CD4-positive, alpha-beta T cell (primary cell): ENCODE measurements at regions of chr7 and their contacts with region 1.

Region 1: DNA sequence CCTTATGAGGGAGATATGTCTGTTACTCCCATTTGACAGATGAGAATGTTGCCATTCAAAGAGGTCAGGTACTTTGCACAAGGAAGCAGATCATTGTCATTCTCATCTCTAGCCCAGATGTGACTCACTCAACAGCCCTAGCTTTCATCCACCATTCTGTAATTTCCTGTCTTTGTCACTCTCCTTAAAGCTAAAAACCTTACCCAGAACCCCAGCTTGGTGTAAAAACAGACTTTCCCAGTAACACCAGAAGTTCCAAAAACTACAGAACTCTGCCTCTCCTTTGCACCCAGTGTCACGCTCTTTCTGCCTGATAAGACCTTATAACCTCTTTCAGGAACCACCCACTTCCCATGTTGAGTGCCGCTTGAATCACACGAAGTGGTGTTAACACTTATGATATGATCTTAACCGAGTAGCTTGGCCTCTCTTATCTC is 89.1 kb upstream of the SP4 start:
- DNase-seq: peak in 6 of 14 experiments; percentile 15 to 75 (median 52)
- ATAC-seq: peak; percentile 73
- H3K4me3 ChIP-seq: no peak overlapping the region
- H3K4me3 Mint-ChIP-seq: peak overlapping the region; percentile 5
- H3K27ac ChIP-seq: peak overlapping the region in 1 of 2 donors; percentile 56
- H3K27ac Mint-ChIP-seq: peak overlapping the region; percentile 46
- H3K4me1 ChIP-seq: peaks cover 15% of the 10 kb centered on the region
- H3K4me1 Mint-ChIP-seq: peaks cover 14% of the 10 kb centered on the region
- H3K27me3 ChIP-seq: no peaks in the 10 kb centered on the region
- H3K27me3 Mint-ChIP-seq: no peaks in the 10 kb centered on the region
- CTCF ChIP-seq: no peak

Region 2: DNA sequence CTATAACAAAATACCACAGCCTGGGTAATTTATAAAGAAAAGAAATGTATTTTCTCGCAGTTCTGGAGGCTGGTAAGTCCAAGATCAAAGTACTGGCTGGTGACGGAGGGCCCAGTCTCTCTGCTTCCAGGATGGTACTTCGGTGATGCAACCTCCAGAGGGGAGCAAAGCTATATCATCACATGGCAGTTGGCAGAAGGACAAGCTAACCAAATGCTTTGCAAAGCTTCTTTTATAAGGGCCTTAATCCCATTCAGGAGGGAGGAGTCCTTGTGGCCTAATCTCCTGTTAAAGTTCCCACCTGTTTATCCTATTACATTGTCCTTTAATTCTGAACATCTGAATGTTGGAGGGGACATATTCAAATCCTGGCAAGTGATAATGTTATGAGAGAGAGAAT is 45.0 kb before region 1 on chr7:
- CTCF ChIA-PET with region 1: no interaction called
- POLR2A ChIA-PET with region 1: no interaction called
- intact Hi-C with region 1: no loop called
- DNase-seq: no peak
- ATAC-seq: no peak
- H3K4me3 ChIP-seq: no peak overlapping the region
- H3K4me3 Mint-ChIP-seq: no peak overlapping the region
- H3K27ac ChIP-seq: no peak overlapping the region
- H3K27ac Mint-ChIP-seq: no peak overlapping the region
- H3K4me1 ChIP-seq: no peaks in the 10 kb centered on the region
- H3K4me1 Mint-ChIP-seq: no peaks in the 10 kb centered on the region
- H3K27me3 ChIP-seq: no peaks in the 10 kb centered on the region
- H3K27me3 Mint-ChIP-seq: no peaks in the 10 kb centered on the region
- CTCF ChIP-seq: no peak

Region 3: DNA sequence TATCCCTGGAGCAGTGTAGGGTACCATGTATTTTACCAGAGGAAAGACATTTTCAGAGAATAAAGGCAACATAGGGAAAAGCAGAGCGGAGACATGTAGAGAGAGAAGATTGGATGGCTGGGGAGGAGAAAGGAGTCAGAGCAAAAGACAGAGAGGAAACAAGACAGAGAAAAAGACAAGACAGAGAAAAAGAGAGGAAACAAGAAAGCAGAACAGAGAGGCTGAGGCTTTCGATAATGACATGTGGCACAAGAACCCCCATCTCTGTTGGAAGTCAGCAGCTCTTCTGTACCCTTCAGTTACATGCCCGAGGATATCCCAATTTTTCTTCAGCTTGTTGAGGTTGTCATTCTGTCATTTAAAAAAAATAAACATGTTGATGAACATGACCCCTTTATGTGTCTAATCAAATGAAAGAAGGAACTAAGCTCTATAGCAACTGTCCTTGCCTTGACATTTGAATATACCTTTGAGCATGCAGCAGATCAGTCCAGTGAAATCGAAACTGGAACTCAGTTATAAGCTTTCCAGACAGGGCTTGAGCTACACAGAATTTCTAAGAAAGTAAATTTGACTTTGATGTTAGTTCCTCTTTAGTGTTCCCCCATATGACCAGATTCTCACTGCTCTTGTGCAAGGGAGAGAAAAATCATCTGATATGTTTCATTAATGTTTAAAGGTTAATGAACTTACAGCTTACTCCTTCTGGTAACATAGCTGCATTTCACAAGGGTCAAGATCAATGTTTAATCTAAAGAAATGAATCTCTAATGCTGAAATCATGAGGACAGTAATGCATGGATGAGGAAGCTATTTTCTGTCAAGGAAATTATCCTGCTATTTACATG is 14.0 kb after region 1 on chr7:
- CTCF ChIA-PET with region 1: interaction called, 3 read pairs
- POLR2A ChIA-PET with region 1: interaction called, 13 read pairs
- intact Hi-C with region 1: no loop called
- DNase-seq: peak in 3 of 14 experiments; percentile 66 to 80 (median 66)
- ATAC-seq: peak; percentile 67
- H3K4me3 ChIP-seq: peak overlapping the region; percentile 29
- H3K4me3 Mint-ChIP-seq: peak overlapping the region; percentile 75
- H3K27ac ChIP-seq: peak overlapping the region; percentile 18 to 68
- H3K27ac Mint-ChIP-seq: peak overlapping the region; percentile 75
- H3K4me1 ChIP-seq: peaks cover 41% of the 10 kb centered on the region
- H3K4me1 Mint-ChIP-seq: peaks cover 54% of the 10 kb centered on the region
- H3K27me3 ChIP-seq: no peaks in the 10 kb centered on the region
- H3K27me3 Mint-ChIP-seq: no peaks in the 10 kb centered on the region
- CTCF ChIP-seq: no peak